Mucosa of descending colon (tissue), 3 donors: ENCODE measurements at regions of chr2 and their contacts with region 1.

Region 1: GRCh38 chr2:42196403-42197267 is 27.5 kb downstream of the EML4 start:
- DNase-seq: peak in 1 of 3 donors; percentile 74
- ATAC-seq: peak; percentile 81
- H3K4me3 ChIP-seq: no peak overlapping the region
- H3K4me1 ChIP-seq: peaks cover 42% of the 10 kb centered on the region
- CTCF ChIP-seq: no peak

Region 2: DNA sequence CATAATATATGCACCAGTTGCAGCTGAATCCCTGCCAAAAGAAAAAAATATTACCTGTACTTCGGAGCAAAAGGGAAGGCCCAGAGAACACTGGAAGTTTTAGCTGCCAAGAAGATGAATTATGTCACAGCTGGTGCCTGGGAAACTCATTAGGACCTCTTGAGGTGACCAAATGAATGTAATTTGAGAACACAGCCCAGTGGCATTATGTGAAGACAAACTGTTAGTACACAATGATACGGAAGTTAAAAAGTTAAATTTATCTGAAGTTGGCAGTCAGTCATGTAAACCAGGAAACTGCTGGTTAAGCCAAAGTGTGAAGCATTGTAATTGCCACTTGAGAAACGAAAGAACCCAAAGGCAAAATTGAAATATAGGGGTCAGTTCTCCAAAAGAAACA is 53.3 kb after region 1 on chr2:
- intact Hi-C with region 1: loop called in 1 of 2 experiments (anchors 10 kb)
- DNase-seq: peak in 1 of 3 donors; percentile 56
- ATAC-seq: peak; percentile 88
- H3K4me3 ChIP-seq: no peak overlapping the region
- H3K4me1 ChIP-seq: peaks cover 28% of the 10 kb centered on the region
- CTCF ChIP-seq: no peak

Region 3: GRCh38 chr2:42424033-42424432 is 227.4 kb after region 1 on chr2:
- intact Hi-C with region 1: no loop called
- DNase-seq: no peak
- ATAC-seq: no peak
- H3K4me3 ChIP-seq: no peak overlapping the region
- H3K4me1 ChIP-seq: peaks cover 4% of the 10 kb centered on the region
- CTCF ChIP-seq: no peak